Common myeloid progenitor, CD34-positive (primary cell): ENCODE measurements at regions of chr13 and their contacts with region 1.

Region 1: GRCh38 chr13:95378603-95379002 is 77.4 kb upstream of the ABCC4 start:
- DNase-seq: no peak
- H3K4me3 ChIP-seq: no peak overlapping the region
- H3K27ac ChIP-seq: no peak overlapping the region
- H3K4me1 ChIP-seq: peaks cover 0 to 3% (median 1%) of the 10 kb centered on the region in 4 experiments
- H3K27me3 ChIP-seq: no peaks in the 10 kb centered on the region

Region 2: DNA sequence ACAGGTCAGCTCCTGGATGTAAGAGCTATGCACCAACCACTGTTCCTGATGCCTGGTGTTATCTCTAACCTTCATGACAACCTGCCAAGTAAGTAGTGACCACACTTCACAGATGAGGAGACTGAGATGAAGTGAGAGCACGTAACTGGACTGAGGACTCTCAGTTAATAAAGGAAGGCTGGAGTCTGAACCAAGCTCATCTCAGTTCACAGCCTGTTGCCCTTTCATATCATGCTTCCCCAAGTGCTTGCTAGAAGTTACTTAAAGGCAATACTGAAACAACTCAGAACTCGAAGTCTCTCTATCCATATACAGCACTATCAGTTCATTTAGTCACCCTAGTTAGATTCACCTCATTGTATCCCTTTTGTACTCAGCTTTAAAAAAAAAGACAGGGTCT is 197.0 kb before region 1 on chr13:
- CTCF ChIA-PET with region 1: no interaction called
- POLR2A ChIA-PET with region 1: no interaction called
- DNase-seq: no peak
- H3K4me3 ChIP-seq: no peak overlapping the region
- H3K27ac ChIP-seq: no peak overlapping the region
- H3K4me1 ChIP-seq: peaks cover 13 to 43% (median 20%) of the 10 kb centered on the region in 4 experiments
- H3K27me3 ChIP-seq: peaks cover 0 to 2% (median 0%) of the 10 kb centered on the region in 5 experiments

Region 3: GRCh38 chr13:95207769-95208366 is 170.7 kb before region 1 on chr13:
- CTCF ChIA-PET with region 1: interaction called, 12 read pairs
- POLR2A ChIA-PET with region 1: interaction called, 4 read pairs
- DNase-seq: peak in 1 of 3 donors; percentile 27
- H3K4me3 ChIP-seq: no peak overlapping the region
- H3K27ac ChIP-seq: no peak overlapping the region
- H3K4me1 ChIP-seq: peaks cover 2 to 7% (median 5%) of the 10 kb centered on the region in 4 experiments
- H3K27me3 ChIP-seq: no peaks in the 10 kb centered on the region

Region 4: GRCh38 chr13:95367309-95367843 is 11.2 kb before region 1 on chr13:
- CTCF ChIA-PET with region 1: interaction called, 31 read pairs
- POLR2A ChIA-PET with region 1: no interaction called
- DNase-seq: no peak
- H3K4me3 ChIP-seq: no peak overlapping the region
- H3K27ac ChIP-seq: no peak overlapping the region
- H3K4me1 ChIP-seq: peaks cover 0 to 2% (median 0%) of the 10 kb centered on the region in 4 experiments
- H3K27me3 ChIP-seq: no peaks in the 10 kb centered on the region